OCI-LY7 (cell line): ENCODE measurements at regions of chr10 and their contacts with region 1.

Region 1: GRCh38 chr10:91163269-91163868 is 57.1 kb upstream of the PCGF5 start:
- DNase-seq: peak; percentile 81
- H3K4me3 ChIP-seq: peak overlapping the region; percentile 82
- H3K27ac ChIP-seq: peak overlapping the region; percentile 54
- H3K4me1 ChIP-seq: peaks cover 7% of the 10 kb centered on the region
- CTCF ChIP-seq: 0 out of 2 replicates have a peak, but pooled peaks have one; percentile 24

Region 2: GRCh38 chr10:91185239-91185875 is 22.0 kb after region 1 on chr10:
- CTCF ChIA-PET with region 1: no interaction called
- POLR2A ChIA-PET with region 1: interaction called, 3 read pairs
- intact Hi-C with region 1: loop called (anchors 2 kb)
- DNase-seq: no peak
- H3K4me3 ChIP-seq: no peak overlapping the region
- H3K27ac ChIP-seq: no peak overlapping the region
- H3K4me1 ChIP-seq: peaks cover under 1% of the 10 kb centered on the region
- CTCF ChIP-seq: no peak

Region 3: DNA sequence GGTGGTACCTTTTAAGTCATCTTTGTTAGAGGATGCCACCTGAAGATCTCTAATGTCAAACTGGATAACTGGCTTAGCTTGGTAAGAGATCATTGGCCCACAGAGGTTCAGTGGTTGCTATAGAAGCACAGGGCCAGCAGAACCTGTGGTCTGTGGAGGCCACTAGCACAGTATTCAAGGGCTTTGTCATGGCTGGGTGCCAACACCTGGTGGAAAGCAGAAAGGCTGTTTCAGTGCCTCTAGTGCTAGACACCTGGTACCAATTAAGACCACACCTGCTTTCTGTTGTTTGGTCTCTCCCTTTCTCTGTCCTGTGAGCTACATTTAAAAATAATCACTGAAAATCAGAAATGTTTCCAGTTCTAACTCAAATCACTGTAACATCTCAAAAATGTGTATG is 47.1 kb after region 1 on chr10:
- CTCF ChIA-PET with region 1: no interaction called
- POLR2A ChIA-PET with region 1: interaction called, 8 read pairs
- intact Hi-C with region 1: loop called (anchors 2 kb)
- DNase-seq: peak; percentile 90
- H3K4me3 ChIP-seq: peak overlapping the region; percentile 12
- H3K27ac ChIP-seq: peak overlapping the region; percentile 74
- H3K4me1 ChIP-seq: peaks cover 65% of the 10 kb centered on the region
- CTCF ChIP-seq: no peak

Region 4: GRCh38 chr10:91220194-91220953 is 57.0 kb after region 1 on chr10 and contains the start of gene PCGF5:
- CTCF ChIA-PET with region 1: interaction called, 8 read pairs
- POLR2A ChIA-PET with region 1: interaction called, 6 read pairs
- intact Hi-C with region 1: loop called (anchors 1 kb)
- DNase-seq: peak; percentile 94
- H3K4me3 ChIP-seq: peak within 1 kb of the TSS; percentile 82
- H3K27ac ChIP-seq: peak within 1 kb of the TSS; percentile 75
- H3K4me1 ChIP-seq: peaks cover 34% of the 10 kb centered on the region
- CTCF ChIP-seq: no peak
- total RNA-seq, gene PCGF5: 25.1 and 32.5 TPM in 2 replicates

Region 5: DNA sequence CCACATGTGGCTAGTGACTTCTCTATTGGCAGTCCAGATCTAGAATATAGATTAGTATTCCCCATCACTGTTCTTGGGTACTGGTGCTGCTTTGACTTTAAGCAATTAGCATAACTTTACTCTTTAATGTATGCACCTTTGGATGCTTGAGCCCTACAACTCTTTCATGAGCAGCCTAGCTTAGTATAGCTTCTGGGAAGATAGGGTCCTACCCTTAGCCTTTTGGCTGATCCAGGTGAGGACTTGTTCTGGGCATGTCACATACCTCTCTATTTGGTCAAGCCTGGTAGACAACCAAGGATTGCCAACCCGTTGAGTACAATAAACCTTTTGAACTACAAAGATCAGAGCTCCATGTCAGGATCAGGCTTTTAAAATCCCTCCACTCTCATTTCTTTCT is 74.8 kb after region 1 on chr10:
- CTCF ChIA-PET with region 1: no interaction called
- POLR2A ChIA-PET with region 1: interaction called, 12 read pairs
- intact Hi-C with region 1: no loop called
- DNase-seq: no peak
- H3K4me3 ChIP-seq: no peak overlapping the region
- H3K27ac ChIP-seq: no peak overlapping the region
- H3K4me1 ChIP-seq: no peaks in the 10 kb centered on the region
- CTCF ChIP-seq: no peak

Region 6: DNA sequence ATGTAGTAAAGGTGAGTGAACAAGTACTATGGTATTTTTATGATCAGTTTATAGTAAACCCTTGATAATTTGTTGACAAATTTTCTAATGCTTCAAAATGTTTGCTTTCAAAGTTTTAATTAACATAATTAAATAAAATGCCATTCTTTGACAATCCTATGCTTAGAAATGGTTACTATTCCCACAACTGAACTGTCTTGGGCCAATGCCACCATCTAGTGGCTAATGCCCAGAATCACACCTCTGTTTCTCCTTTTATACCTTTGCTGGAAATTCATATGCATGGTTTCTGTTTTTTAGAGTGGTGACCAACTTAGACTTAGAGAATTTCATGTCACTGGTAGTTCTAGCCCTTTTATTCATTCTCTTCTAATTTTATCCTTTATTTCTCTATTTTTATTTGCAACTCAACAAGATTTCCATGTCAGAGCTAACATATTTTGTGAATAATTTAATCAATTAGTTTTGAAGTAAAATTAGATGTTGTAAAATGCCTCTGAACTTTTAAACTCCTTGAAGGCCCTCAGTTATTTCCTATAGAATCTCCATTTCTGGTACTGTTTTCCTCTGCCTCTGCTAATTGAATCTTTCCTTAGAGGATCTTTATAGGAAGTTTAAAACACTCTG is 88.2 kb after region 1 on chr10:
- CTCF ChIA-PET with region 1: interaction called, 4 read pairs
- POLR2A ChIA-PET with region 1: interaction called, 9 read pairs
- intact Hi-C with region 1: loop called (anchors 2 kb)
- DNase-seq: peak; percentile 68
- H3K4me3 ChIP-seq: no peak overlapping the region
- H3K27ac ChIP-seq: no peak overlapping the region
- H3K4me1 ChIP-seq: no peaks in the 10 kb centered on the region
- CTCF ChIP-seq: peak; percentile 98

Region 7: DNA sequence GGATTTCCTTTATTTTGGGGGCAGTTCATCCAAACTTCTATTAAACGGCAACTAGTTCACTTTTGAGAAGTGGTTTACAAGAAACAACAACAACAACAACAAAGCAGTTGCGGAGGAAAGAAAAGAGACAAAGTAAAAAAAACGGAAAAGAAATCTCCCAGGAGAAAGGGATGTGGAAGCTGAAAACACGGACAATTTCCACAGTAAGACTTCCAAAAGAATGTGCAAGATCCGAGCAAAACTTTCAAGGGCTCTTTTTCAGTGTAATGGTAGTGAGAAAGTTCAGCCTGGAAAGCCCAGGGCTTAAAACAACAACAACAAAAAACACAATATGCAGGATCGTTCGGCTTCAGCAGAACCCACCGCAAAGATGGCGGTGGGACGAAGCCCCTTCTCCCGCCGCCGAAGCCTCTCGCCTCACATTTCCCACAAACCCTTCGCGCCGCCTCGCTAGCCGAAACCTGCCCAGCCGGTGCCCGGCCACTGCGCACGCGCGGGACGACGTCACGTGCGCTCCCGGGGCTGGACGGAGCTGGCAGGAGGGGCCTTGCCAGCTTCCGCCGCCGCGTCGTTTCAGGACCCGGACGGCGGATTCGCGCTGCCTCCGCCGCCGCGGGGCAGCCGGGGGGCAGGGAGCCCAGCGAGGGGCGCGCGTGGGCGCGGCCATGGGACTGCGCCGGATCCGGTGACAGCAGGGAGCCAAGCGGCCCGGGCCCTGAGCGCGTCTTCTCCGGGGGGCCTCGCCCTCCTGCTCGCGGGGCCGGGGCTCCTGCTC is 634.7 kb after region 1 on chr10 and contains the start of gene TNKS2:
- CTCF ChIA-PET with region 1: no interaction called
- POLR2A ChIA-PET with region 1: no interaction called
- intact Hi-C with region 1: loop called (anchors 5 kb)
- DNase-seq: peak; percentile 96
- H3K4me3 ChIP-seq: peak within 1 kb of the TSS; percentile 85
- H3K27ac ChIP-seq: peak within 1 kb of the TSS; percentile 84
- H3K4me1 ChIP-seq: peaks cover 33% of the 10 kb centered on the region
- CTCF ChIP-seq: no peak
- total RNA-seq, gene TNKS2: 18.0 and 20.0 TPM in 2 replicates